ENCODE measurements at regions of chr4 and their contacts with region 1.

Region 1: DNA sequence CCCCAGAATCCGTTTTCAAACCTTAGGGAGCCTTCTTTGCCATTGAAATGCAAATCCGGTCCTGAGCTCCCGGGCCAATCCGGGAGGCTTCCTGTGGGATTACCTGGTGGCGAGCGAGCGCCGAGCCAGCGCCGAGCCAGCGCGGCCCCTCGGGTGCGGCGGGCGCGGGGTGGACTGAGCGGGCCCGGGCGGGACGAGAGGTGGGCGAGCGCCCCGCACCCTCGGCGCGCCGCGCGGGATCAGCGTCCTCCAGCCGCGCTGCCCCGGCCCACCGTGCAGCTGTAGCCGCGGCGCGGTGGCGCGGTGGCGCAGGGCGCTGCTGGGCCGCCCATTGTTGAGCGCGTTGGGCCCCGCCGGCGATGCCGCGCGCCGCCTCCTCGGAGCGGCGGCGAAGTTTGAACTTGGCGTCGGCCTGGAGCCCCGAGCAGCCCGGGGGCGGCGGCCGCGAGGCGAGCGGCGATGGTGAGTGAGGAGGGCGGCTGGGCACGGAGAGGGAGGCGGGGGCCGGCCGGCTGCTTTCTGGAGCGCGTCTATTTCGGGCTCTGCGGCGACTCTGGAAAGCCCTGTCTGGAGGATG is 208.6 kb downstream of the SOWAHB start:
- DNase-seq: peak; percentile 70
- H3K4me3 Mint-ChIP-seq: peak overlapping the region; percentile 86
- H3K27ac Mint-ChIP-seq: peak overlapping the region; percentile 82
- H3K4me1 Mint-ChIP-seq: peaks cover 29% of the 10 kb centered on the region
- H3K27me3 Mint-ChIP-seq: no peaks in the 10 kb centered on the region
- CTCF ChIP-seq: no peak

Region 2: GRCh38 chr4:76585897-76586360 is 103.4 kb before region 1 on chr4:
- CTCF ChIA-PET with region 1: no interaction called
- POLR2A ChIA-PET with region 1: interaction called, 11 read pairs
- intact Hi-C with region 1: no loop called
- DNase-seq: peak; percentile 85
- H3K4me3 Mint-ChIP-seq: peak overlapping the region; percentile 72
- H3K27ac Mint-ChIP-seq: peak overlapping the region; percentile 70
- H3K4me1 Mint-ChIP-seq: peaks cover 29% of the 10 kb centered on the region
- H3K27me3 Mint-ChIP-seq: no peaks in the 10 kb centered on the region
- CTCF ChIP-seq: peak; percentile 17

Region 3: GRCh38 chr4:76640353-76640910 is 48.9 kb before region 1 on chr4:
- CTCF ChIA-PET with region 1: interaction called, 4 read pairs
- POLR2A ChIA-PET with region 1: interaction called, 11 read pairs
- intact Hi-C with region 1: no loop called
- DNase-seq: peak; percentile 73
- H3K4me3 Mint-ChIP-seq: peak overlapping the region; percentile 70
- H3K27ac Mint-ChIP-seq: peak overlapping the region; percentile 98
- H3K4me1 Mint-ChIP-seq: peaks cover 43% of the 10 kb centered on the region
- H3K27me3 Mint-ChIP-seq: no peaks in the 10 kb centered on the region
- CTCF ChIP-seq: no peak

Region 4: DNA sequence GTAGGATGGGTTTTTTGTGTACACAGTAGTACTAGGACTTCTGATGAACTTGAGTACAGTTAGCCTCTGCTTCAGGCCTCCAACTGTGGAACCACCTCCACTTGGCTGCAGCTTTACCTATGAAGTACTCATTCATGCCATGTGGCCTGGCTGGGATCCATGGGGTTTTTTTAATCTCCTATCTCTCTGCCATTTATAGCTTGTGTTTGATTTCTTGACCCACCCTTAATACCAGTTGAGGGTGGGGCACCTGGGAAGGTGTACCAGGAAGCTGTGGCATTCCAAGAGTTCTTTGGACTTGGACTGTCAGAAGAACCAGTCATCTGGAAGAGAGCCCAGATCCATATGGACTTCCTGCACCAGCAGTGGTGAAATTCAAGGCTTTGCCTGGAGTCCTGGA is 24.2 kb before region 1 on chr4:
- CTCF ChIA-PET with region 1: interaction called, 3 read pairs
- POLR2A ChIA-PET with region 1: interaction called, 15 read pairs
- intact Hi-C with region 1: no loop called
- DNase-seq: peak; percentile 92
- H3K4me3 Mint-ChIP-seq: no peak overlapping the region
- H3K27ac Mint-ChIP-seq: peak overlapping the region; percentile 93
- H3K4me1 Mint-ChIP-seq: peaks cover 19% of the 10 kb centered on the region
- H3K27me3 Mint-ChIP-seq: no peaks in the 10 kb centered on the region
- CTCF ChIP-seq: no peak

Region 5: DNA sequence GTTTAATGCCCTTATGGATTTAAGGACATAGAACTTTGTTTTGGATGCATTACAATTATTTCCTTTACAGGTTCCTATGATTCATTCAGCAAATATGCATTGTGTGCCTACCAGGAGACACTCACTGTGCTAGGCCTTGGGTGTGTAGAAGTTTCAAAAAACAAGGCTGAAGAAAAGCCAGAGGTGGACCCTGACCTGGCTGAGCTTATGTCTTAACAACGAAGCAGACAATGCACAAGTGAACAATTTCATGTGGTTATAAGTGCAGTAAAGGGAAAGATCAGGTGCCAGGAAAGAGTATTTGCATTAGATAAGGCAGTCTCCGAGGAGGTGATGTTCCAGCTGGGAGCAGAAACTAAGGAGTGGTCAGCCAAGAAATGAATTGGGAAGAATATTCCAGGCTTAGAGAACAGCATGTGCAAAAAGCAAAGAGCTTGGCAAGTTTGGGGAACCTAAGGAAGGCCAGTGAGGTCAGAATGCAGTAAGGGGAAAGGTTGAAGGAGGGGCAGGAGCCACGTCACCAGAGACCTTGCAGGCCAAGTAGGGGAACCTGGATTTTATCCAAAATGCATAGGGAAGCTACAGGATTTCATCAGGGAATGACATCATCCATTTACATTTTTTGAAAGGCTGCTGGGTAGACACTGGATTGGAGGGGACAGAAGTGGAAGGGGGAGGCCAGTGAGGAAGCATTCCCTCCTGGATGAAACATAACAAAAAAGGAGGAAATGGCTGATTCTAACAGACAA is 15.0 kb after region 1 on chr4:
- CTCF ChIA-PET with region 1: interaction called, 4 read pairs
- POLR2A ChIA-PET with region 1: interaction called, 86 read pairs
- intact Hi-C with region 1: no loop called
- DNase-seq: peak; percentile 90
- H3K4me3 Mint-ChIP-seq: peak overlapping the region; percentile 24
- H3K27ac Mint-ChIP-seq: peak overlapping the region; percentile 82
- H3K4me1 Mint-ChIP-seq: peaks cover 55% of the 10 kb centered on the region
- H3K27me3 Mint-ChIP-seq: no peaks in the 10 kb centered on the region
- CTCF ChIP-seq: no peak

Region 6: DNA sequence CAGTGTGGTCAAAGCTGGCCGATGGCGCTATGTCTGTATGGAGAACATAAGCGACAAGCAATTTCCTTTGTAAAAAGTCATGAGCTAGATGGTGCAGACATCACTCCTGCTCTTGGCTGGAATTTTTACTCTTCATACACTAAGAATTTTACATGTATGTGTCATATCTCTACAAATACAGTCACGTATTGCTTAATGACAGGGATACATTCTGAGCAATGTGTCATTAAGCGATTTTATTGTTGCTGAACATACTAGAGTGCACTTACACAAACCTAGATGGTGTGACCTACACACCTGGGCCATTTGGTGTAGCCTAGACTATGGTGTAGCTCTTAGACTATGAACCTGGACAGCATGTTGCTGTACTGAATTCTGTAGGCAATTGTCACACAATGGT is 23.2 kb after region 1 on chr4:
- CTCF ChIA-PET with region 1: no interaction called
- POLR2A ChIA-PET with region 1: interaction called, 15 read pairs
- intact Hi-C with region 1: no loop called
- DNase-seq: no peak
- H3K4me3 Mint-ChIP-seq: no peak overlapping the region
- H3K27ac Mint-ChIP-seq: peak overlapping the region; percentile 42
- H3K4me1 Mint-ChIP-seq: peaks cover 32% of the 10 kb centered on the region
- H3K27me3 Mint-ChIP-seq: no peaks in the 10 kb centered on the region
- CTCF ChIP-seq: no peak

Region 7: GRCh38 chr4:76758290-76758882 is 69.1 kb after region 1 on chr4:
- CTCF ChIA-PET with region 1: no interaction called
- POLR2A ChIA-PET with region 1: no interaction called
- intact Hi-C with region 1: loop called (anchors 2 kb)
- DNase-seq: peak; percentile 80
- H3K4me3 Mint-ChIP-seq: no peak overlapping the region
- H3K27ac Mint-ChIP-seq: no peak overlapping the region
- H3K4me1 Mint-ChIP-seq: peaks cover 8% of the 10 kb centered on the region
- H3K27me3 Mint-ChIP-seq: no peaks in the 10 kb centered on the region
- CTCF ChIP-seq: peak; percentile 52